ENCODE measurements at regions of chr12 and their contacts with region 1.

Region 1: DNA sequence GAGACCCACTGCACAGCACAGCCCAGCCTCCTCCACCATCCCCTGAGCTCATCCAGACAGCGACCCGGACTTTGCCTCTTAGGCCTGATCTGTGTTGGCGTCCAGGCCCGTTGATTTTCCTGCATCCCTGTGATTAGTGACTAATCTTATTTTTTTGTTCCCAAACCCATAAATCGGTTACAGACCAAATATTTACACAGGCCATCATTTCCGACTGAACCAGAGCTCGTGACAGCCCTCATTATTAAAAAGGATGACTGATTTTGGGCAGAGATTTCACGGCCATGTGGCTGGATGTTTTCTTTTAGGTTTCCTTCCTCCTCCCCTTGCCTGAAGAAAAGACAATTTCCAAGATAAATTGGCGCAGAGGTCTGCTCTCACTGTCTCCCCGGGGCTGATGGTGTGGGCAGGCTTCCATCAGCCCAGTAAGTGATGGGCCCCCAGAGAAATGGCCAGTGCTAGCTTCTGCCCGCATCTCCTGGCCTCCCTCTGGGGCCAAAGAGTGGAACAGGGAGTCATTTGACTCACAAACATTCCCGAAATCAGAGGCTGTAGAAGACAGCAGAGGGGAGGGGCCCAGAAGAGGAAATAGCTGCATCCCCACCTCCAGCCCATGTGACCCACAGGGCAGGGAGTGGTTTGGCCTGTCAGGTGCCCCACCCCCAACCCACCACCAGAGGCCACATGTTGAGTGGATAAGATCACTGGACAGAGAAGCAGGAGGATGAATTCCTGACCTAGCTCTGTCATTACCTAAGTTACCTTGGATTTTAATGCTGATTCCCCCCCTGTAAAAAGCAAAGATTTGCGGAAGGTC is 283.5 kb downstream of the KSR2 start:
- DNase-seq: peak; percentile 97
- H3K4me3 ChIP-seq: no peak overlapping the region
- H3K27ac ChIP-seq: peak overlapping the region; percentile 98
- H3K4me1 ChIP-seq: peaks cover 51% of the 10 kb centered on the region
- H3K27me3 ChIP-seq: no peaks in the 10 kb centered on the region
- CTCF ChIP-seq: no peak
- POLR2A ChIP-seq: no peak

Region 2: DNA sequence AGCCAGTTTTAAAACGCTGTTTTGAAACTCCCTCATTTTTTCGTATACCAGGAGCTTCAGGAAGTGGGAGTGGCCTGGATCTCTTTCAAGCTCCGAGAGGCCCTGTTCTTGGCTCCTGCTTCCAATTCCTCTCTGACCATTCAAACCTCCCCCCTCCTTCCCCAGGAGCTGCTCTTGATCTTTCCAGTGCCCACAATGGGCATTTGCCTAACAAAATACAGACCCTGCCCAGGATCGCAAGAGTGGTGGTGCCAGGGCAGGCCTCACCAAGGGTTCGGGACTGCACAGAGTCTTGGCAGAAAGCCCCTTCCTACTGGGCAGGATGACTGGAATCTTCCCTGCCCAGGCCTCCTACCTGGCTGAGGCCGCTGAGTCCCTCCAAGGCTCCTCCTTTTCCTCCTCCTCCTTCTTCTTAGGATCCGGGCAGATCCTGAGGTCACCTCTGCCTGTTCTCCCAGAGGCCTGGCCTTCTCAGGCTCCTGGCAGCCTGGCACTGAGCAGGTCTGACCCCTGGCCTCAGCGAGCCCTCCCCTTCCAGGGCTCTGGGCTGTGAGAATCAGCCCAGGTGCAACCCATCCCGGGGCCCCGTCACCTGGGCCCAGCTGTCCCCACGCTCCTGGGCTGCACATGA is 277.0 kb before region 1 on chr12:
- CTCF ChIA-PET with region 1: no interaction called
- POLR2A ChIA-PET with region 1: no interaction called
- dilution Hi-C with region 1: no loop called
- intact Hi-C with region 1: no loop called
- DNase-seq: peak; percentile 41
- H3K4me3 ChIP-seq: no peak overlapping the region
- H3K27ac ChIP-seq: no peak overlapping the region
- H3K4me1 ChIP-seq: no peaks in the 10 kb centered on the region
- H3K27me3 ChIP-seq: no peaks in the 10 kb centered on the region
- CTCF ChIP-seq: no peak
- POLR2A ChIP-seq: no peak

Region 3: DNA sequence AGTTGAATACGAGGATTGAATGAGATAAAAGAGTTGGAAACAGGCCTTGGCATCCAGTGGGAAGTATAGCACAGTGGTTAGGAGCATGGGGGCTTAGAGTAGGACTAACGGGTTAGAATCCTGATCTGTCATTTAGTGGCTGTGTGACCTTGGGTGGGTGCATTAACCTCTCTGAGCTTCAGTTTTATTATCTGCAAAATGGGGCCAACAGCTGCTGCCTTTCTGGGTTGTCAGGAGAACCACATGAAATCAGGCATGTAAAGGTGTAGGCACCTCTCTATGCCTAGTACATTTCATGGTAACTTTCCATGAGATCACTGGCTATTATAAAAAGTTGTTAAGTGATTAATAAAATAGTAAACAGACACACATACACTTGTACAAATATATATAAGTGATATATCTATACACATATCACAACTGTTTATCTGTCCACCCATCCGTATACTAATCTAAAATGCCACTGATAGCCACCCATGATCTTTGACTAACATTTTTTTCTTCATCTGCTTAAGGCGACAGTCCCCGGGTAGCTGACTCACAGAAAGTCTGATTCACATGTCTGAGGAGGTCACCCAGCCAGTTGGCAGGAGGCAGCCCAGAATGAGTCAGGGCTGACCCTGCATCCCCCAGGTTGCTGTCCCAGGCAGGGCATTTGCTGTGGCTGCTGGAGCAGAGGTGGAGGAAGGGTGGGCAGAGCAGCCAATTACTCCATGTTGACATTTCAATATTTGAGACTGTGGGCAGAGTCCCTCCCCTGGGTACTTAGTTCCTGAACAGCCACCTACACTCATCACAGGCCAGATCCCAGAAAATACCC is 198.3 kb before region 1 on chr12:
- CTCF ChIA-PET with region 1: no interaction called
- POLR2A ChIA-PET with region 1: no interaction called
- dilution Hi-C with region 1: no loop called
- intact Hi-C with region 1: loop called (anchors 5 kb)
- DNase-seq: peak; percentile 94
- H3K4me3 ChIP-seq: no peak overlapping the region
- H3K27ac ChIP-seq: peak overlapping the region; percentile 47
- H3K4me1 ChIP-seq: peaks cover 9% of the 10 kb centered on the region
- H3K27me3 ChIP-seq: no peaks in the 10 kb centered on the region
- CTCF ChIP-seq: no peak
- POLR2A ChIP-seq: no peak

Region 4: DNA sequence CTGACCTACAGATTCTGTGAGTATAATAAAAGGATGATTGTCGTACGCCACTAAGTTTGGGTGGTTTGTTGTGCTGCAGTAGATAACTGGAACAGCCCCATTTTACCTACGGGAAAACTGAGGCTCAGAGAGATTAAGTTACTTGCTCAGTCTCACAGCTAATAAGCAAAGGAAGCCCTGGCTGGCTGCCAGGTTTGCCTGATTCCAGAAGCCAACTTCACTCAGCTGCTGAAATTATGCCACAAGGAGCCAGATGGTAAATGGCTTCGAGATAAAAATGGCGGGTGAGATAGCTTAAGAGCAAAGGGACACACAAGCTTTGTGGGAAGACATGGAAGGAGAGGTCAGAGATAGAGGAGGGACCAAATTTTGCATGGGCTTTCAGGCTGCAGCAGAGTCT is 132.3 kb before region 1 on chr12:
- CTCF ChIA-PET with region 1: no interaction called
- POLR2A ChIA-PET with region 1: no interaction called
- dilution Hi-C with region 1: no loop called
- intact Hi-C with region 1: no loop called
- DNase-seq: peak; percentile 8
- H3K4me3 ChIP-seq: no peak overlapping the region
- H3K27ac ChIP-seq: no peak overlapping the region
- H3K4me1 ChIP-seq: no peaks in the 10 kb centered on the region
- H3K27me3 ChIP-seq: no peaks in the 10 kb centered on the region
- CTCF ChIP-seq: no peak
- POLR2A ChIP-seq: no peak

Region 5: DNA sequence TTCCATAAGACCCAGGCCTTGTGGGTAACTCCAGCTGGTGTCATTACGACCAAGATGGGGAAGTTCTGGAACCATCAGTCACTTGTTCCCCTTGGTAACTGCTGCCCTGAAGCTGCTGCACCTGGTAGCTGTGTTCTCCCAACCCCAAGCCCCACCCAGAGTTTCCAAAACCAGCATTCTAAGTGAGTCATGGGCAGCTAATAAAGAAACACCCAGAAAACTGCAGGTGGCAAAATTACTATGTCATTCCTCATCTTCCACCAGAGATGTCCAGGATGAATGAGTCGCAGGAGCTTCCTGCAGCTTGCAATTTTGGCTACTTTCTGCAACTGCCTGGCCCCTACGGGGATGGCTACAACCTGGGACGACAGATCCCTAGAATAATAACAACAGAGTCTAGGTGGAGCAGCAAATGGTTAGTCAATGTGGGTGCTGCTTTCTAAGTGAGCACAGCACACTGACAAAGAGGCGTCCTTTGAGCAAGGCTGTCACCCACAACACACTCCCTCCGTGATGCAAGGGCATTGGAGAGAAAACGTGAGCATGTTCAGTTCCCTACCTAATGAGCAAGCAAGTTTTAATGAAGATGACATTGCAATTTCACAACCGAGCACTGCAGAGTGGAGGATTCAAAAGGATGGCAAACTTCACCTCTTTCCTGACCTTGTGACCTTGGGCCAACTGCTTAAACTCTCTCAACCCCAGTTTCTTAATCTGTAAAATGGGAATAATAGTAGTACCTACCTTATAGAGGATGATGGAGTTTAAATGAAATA is 22.5 kb before region 1 on chr12:
- CTCF ChIA-PET with region 1: interaction called, 5 read pairs
- POLR2A ChIA-PET with region 1: interaction called, 3 read pairs
- dilution Hi-C with region 1: no loop called
- intact Hi-C with region 1: loop called (anchors 1 kb)
- DNase-seq: peak; percentile 57
- H3K4me3 ChIP-seq: no peak overlapping the region
- H3K27ac ChIP-seq: peak overlapping the region; percentile 22
- H3K4me1 ChIP-seq: peaks cover 24% of the 10 kb centered on the region
- H3K27me3 ChIP-seq: no peaks in the 10 kb centered on the region
- CTCF ChIP-seq: no peak
- POLR2A ChIP-seq: no peak

Region 6: DNA sequence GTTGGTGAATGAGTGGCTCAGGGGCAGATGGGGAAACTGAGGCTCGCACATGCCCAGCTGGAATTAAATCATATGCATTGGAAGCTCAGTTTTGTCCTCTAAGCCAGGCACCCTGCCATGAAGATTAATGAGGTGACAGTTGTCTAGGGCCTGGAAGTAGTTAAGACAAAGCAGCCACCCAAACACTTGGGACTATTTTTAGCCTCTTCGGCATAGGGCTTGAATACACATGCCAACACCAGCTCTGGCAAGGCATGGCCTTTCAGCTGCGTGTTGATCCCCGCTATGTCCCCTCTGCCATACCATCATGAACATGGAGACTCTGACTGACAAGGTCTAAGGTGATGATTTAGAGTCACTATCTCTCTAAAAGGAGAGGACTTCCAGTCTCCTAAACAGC is 33.2 kb after region 1 on chr12:
- CTCF ChIA-PET with region 1: no interaction called
- POLR2A ChIA-PET with region 1: no interaction called
- dilution Hi-C with region 1: no loop called
- intact Hi-C with region 1: loop called (anchors 1 kb)
- DNase-seq: no peak
- H3K4me3 ChIP-seq: no peak overlapping the region
- H3K27ac ChIP-seq: no peak overlapping the region
- H3K4me1 ChIP-seq: no peaks in the 10 kb centered on the region
- H3K27me3 ChIP-seq: no peaks in the 10 kb centered on the region
- CTCF ChIP-seq: no peak
- POLR2A ChIP-seq: no peak

Region 7: GRCh38 chr12:118055144-118055557 is 369.8 kb after region 1 on chr12:
- CTCF ChIA-PET with region 1: no interaction called
- POLR2A ChIA-PET with region 1: no interaction called
- dilution Hi-C with region 1: no loop called
- intact Hi-C with region 1: loop called (anchors 2 kb)
- DNase-seq: peak; percentile 61
- H3K4me3 ChIP-seq: no peak overlapping the region
- H3K27ac ChIP-seq: no peak overlapping the region
- H3K4me1 ChIP-seq: peaks cover 36% of the 10 kb centered on the region
- H3K27me3 ChIP-seq: no peaks in the 10 kb centered on the region
- CTCF ChIP-seq: peak; percentile 58 to 68
- POLR2A ChIP-seq: no peak

Measured in endothelial cell of umbilical vein (primary cell).